Adrenal gland (tissue), 19 donors: ENCODE measurements at regions of chr2 and their contacts with region 1.

Region 1: GRCh38 chr2:177148477-177149154 is 64.0 kb upstream of the HNRNPA3 start:
- DNase-seq: peak; percentile 70 to 89 (median 82)
- H3K4me3 ChIP-seq: peak overlapping the region in 2 of 4 donors; percentile 13 to 55
- H3K27ac ChIP-seq: no peak overlapping the region
- H3K4me1 ChIP-seq: peaks cover 0 to 6% of the 10 kb centered on the region in 2 donors
- H3K27me3 ChIP-seq: peaks cover 12% of the 10 kb centered on the region
- CTCF ChIP-seq: peak; percentile 51 to 85 (median 71)
- POLR2A ChIP-seq: no peak

Region 2: DNA sequence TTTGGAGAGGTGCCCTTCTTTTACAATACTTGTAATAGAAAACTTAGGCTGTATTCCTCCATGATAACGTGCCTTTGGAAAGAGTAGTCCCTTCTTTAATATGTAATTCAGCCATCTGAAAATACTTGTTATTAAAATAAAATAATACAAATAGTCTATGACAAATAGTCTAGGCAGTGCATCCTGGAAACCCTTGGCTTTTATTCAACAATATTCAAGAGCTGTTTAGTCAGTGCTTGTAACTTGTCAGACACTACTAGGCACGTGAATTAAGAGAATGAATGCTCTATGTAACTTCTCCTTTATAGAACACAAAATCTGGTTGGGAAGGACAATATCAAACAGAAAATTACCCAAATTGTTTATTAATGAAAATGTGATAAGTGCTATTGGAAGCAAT is 491.2 kb before region 1 on chr2:
- intact Hi-C with region 1: loop called in 1 of 2 experiments (anchors 5 kb)
- DNase-seq: no peak
- H3K4me3 ChIP-seq: no peak overlapping the region
- H3K27ac ChIP-seq: no peak overlapping the region
- H3K4me1 ChIP-seq: peaks cover 0 to 12% of the 10 kb centered on the region in 2 donors
- H3K27me3 ChIP-seq: no peaks in the 10 kb centered on the region
- CTCF ChIP-seq: no peak
- POLR2A ChIP-seq: no peak

Region 3: GRCh38 chr2:176789751-176790150 is 358.9 kb before region 1 on chr2:
- intact Hi-C with region 1: no loop called
- DNase-seq: no peak
- H3K4me3 ChIP-seq: no peak overlapping the region
- H3K27ac ChIP-seq: no peak overlapping the region
- H3K4me1 ChIP-seq: peaks cover 0 to 6% of the 10 kb centered on the region in 2 donors
- H3K27me3 ChIP-seq: no peaks in the 10 kb centered on the region
- CTCF ChIP-seq: no peak
- POLR2A ChIP-seq: no peak

Region 4: DNA sequence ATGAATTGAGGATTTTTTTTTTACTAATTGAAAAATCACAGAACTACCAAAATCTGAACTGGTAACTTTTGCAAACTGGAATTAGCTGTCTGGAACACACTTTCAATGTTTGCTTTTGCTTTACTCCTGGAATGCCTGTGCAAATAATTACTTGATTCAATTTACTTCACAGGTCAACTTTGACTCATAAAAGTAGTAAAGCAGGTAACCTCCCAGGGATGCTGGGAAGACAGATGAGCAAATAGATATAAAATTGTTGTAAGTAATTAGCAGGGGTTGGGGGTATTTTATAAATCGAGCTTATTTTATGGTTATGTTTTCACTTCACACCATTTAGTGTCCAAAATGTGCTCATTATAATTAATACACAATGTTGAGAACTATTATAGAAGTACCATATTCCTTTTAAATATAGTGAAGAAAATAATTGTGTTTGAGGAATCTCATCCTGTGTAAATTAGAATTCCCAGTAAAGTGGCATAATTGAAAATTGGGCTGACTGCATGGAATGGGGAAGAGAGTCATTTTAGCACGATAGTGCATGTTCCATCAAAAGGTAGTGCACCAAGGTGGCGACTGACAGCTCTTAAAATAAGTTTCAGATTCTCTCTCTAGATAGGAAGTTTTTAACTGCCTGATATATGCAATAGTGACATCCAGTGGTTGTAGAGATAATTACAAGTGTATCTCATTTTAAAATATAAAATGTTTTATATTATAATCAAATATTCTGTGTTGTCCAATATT is 334.1 kb before region 1 on chr2:
- intact Hi-C with region 1: loop called in 1 of 2 experiments (anchors 10 kb)
- DNase-seq: no peak
- H3K4me3 ChIP-seq: no peak overlapping the region
- H3K27ac ChIP-seq: no peak overlapping the region
- H3K4me1 ChIP-seq: peaks cover 16 to 30% of the 10 kb centered on the region in 2 donors
- H3K27me3 ChIP-seq: no peaks in the 10 kb centered on the region
- CTCF ChIP-seq: peak; percentile 54 to 80 (median 70)
- POLR2A ChIP-seq: no peak

Region 5: DNA sequence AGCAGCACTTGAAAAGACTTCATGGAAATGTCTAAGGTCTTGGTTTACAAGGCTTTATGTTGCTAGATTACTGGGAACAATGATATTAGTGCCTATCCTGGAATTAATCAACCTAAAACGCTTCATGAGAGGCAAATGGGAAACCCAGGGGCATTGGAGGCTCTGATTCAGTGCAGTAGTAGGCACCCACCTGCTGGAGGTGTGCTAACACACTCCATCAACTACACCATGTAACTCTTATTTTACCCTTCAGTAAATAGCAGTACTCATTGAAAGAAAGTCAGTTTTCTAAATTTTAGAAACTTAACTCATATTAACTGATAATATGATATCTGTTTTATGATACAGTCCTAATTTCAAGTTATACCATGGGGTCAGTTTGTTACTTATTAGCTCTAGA is 46.6 kb after region 1 on chr2:
- intact Hi-C with region 1: no loop called
- DNase-seq: no peak
- H3K4me3 ChIP-seq: no peak overlapping the region
- H3K27ac ChIP-seq: no peak overlapping the region
- H3K4me1 ChIP-seq: no peaks in the 10 kb centered on the region
- H3K27me3 ChIP-seq: no peaks in the 10 kb centered on the region
- CTCF ChIP-seq: no peak
- POLR2A ChIP-seq: no peak